ENCODE measurements at regions of chr16 and their contacts with region 1.

Region 1: DNA sequence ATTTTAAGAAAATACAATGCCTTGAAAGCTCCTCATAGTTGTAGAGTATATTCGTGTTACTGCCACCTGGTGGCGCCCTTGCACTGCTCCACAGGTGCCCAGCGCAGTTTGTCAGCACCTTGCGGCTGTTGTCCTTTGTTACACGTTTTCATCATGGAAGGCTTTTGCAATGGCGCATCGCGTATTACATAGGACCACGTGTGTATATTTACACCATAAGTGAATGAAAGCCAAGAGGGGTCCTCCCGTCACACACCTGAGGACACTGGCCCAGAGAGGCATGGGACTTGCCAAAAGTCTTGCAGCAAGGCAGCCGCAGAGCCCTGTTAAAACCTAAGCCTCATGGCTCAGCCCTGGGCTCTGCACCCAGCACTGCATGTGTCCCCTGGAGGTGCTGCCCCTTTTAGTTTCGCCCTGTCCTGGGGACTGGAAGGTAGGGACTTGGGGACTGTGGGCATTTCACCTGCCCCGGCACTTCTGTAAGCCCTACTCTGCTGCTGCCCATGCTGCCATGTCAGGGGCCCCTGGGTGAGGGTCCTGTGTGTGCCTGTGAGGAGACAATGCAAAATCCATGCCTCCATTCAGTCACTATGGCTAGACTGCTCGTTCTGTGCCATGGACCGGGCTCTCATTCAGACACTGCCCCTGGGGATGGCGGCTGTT is 24.3 kb downstream of the POLR3E start:
- DNase-seq: peak; percentile 50 to 59
- ATAC-seq: peak; percentile 39 to 73 (median 66)
- H3K4me3 ChIP-seq: no peak overlapping the region
- H3K27ac ChIP-seq: no peak overlapping the region
- H3K4me1 ChIP-seq: peaks cover 0 to 15% (median 4%) of the 10 kb centered on the region in 9 donors
- H3K27me3 ChIP-seq: no peaks in the 10 kb centered on the region
- CTCF ChIP-seq: peak; percentile 81 to 94 (median 91)

Region 2: GRCh38 chr16:22417019-22417418 is 95.5 kb after region 1 on chr16:
- intact Hi-C with region 1: loop called in 2 of 10 experiments (anchors 10 kb)
- DNase-seq: no peak
- ATAC-seq: no peak
- H3K4me3 ChIP-seq: no peak overlapping the region
- H3K27ac ChIP-seq: no peak overlapping the region
- H3K4me1 ChIP-seq: no peaks in the 10 kb centered on the region
- H3K27me3 ChIP-seq: no peaks in the 10 kb centered on the region
- CTCF ChIP-seq: no peak